ENCODE measurements at regions of chr12 and their contacts with region 1.

Region 1: DNA sequence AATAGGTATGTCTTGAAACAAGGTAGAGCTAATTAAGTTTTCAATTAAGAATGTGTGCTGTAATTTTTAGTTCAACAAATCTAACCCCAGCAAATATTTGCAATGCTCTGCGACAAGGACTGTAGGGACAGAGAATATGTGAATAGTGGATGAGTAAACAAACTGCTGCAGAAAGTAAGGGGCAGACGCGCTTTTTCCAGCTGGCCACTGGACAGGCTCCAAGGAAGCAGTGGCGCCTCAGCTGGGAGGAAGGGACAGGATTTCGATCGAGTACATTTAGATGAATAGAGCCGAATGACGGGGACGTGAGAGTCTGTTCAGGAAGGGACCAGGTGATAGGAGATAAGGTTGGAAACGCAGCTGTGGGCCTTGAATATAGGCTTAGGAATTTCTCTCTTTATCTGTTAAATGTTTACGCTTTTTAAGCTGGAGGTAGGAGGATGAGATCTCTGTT is 69.3 kb downstream of the ELK3 start:
- DNase-seq: no peak
- H3K4me3 ChIP-seq: no peak overlapping the region
- H3K27ac ChIP-seq: no peak overlapping the region
- H3K4me1 ChIP-seq: no peaks in the 10 kb centered on the region
- H3K27me3 ChIP-seq: no peaks in the 10 kb centered on the region

Region 2: DNA sequence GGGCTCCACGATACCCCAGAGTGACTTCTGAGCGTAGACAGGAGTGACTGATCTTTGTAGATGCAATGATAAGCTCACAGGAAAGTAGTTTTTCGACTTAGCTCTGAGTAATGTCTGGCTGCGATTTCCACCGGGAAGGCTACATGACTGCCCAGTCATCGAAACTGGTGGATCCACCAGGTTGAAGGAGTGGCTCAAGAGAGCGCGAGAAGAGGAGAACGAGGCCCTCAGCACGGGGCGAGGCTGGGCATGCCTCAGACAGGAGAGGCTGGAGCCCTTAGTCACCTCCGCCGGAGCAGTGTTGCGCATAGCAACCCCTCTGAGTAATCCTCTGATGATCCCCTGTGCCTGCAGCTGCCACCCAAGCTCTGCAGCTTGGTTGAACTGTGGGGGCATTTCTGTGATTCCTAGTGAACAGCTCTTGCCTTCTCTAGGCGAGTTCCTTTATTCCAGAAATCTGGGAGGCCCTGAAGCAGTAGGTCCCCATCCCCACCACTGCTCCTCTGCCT is 43.7 kb before region 1 on chr12:
- CTCF ChIA-PET with region 1: no interaction called
- POLR2A ChIA-PET with region 1: no interaction called
- DNase-seq: no peak
- H3K4me3 ChIP-seq: no peak overlapping the region
- H3K27ac ChIP-seq: peak overlapping the region in 1 of 2 experiments; percentile 3
- H3K4me1 ChIP-seq: peaks cover 19 to 43% (median 33%) of the 10 kb centered on the region in 4 experiments
- H3K27me3 ChIP-seq: no peaks in the 10 kb centered on the region

Region 3: GRCh38 chr12:96249196-96250118 is 14.0 kb before region 1 on chr12:
- CTCF ChIA-PET with region 1: interaction called, 10 read pairs
- POLR2A ChIA-PET with region 1: no interaction called
- DNase-seq: no peak
- H3K4me3 ChIP-seq: no peak overlapping the region
- H3K27ac ChIP-seq: no peak overlapping the region
- H3K4me1 ChIP-seq: peaks cover 0 to 16% (median 0%) of the 10 kb centered on the region in 4 experiments
- H3K27me3 ChIP-seq: no peaks in the 10 kb centered on the region